HCT116 (cell line): ENCODE measurements at regions of chr1 and their contacts with region 1.

Region 1: DNA sequence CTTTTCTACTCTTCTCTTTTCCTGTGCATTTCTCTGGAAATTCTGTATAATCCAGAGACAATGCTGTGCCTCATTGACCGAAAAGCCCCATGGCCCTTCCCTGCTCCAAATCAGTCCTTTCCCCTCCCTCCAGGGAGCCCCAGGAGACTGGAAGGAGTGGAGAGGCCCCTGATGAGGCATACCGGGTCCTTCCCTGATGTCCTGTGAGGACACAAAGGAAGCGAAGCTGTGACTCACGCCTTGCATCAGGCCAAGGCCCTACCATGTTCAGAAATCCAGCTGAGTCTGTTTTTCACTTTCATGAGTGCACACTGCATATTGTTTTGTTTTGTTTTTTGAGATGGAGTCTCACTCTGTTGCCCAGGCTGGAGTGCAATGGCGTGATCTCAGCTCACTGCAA is 38.7 kb upstream of the BECN2 start:
- DNase-seq: no peak
- ATAC-seq: no peak
- H3K4me3 ChIP-seq: no peak overlapping the region
- H3K27ac ChIP-seq: no peak overlapping the region
- H3K4me1 ChIP-seq: no peaks in the 10 kb centered on the region
- H3K27me3 ChIP-seq: no peaks in the 10 kb centered on the region
- CTCF ChIP-seq: no peak
- POLR2A ChIP-seq: no peak
- RAD21 ChIP-seq: no peak

Region 2: GRCh38 chr1:241782396-241782795 is 136.5 kb before region 1 on chr1:
- CTCF ChIA-PET with region 1: no interaction called
- POLR2A ChIA-PET with region 1: no interaction called
- RAD21 ChIA-PET with region 1: no interaction called
- intact Hi-C with region 1: no loop called
- DNase-seq: no peak
- ATAC-seq: no peak
- H3K4me3 ChIP-seq: no peak overlapping the region
- H3K27ac ChIP-seq: no peak overlapping the region
- H3K4me1 ChIP-seq: no peaks in the 10 kb centered on the region
- H3K27me3 ChIP-seq: no peaks in the 10 kb centered on the region
- CTCF ChIP-seq: no peak
- POLR2A ChIP-seq: no peak
- RAD21 ChIP-seq: no peak

Region 3: GRCh38 chr1:241972703-241973369 is 54.0 kb after region 1 on chr1:
- CTCF ChIA-PET with region 1: no interaction called
- POLR2A ChIA-PET with region 1: no interaction called
- RAD21 ChIA-PET with region 1: no interaction called
- intact Hi-C with region 1: loop called (anchors 5 kb)
- DNase-seq: no peak
- ATAC-seq: no peak
- H3K4me3 ChIP-seq: no peak overlapping the region
- H3K27ac ChIP-seq: no peak overlapping the region
- H3K4me1 ChIP-seq: no peaks in the 10 kb centered on the region
- H3K27me3 ChIP-seq: no peaks in the 10 kb centered on the region
- CTCF ChIP-seq: no peak
- POLR2A ChIP-seq: no peak
- RAD21 ChIP-seq: no peak